ENCODE measurements at regions of chr20 and their contacts with region 1.

Region 1: DNA sequence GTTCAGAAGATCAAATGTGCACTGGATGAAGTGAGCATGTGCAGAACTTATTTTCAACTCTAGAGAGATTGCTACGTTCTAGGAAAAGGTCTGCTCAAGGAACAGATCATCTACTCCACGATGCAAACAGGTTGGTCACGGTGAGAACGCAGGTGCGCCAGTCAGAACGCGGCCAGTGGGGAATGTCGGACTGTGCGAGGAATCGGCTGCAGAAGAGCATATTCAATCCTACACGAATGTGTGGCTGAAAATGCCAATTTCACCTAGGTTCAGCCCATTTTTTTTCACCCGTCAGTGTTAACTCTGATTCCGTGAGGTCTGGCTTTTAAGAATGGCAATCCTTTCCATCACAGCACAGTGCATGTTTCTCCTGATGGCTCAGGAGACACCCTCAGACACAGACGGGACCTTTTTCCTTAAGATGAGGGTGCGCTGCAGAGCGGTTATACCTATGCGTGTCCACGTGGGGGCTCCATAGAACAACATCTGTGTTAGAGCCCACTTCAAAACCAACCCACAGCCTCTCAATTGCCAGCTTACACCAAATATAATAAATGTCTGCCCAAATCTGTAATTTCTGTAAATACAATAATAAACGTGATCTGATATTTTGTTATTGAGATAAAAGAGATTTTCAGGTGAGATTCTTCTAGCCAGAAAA is 250.4 kb downstream of the FOXA2 start:
- DNase-seq: peak; percentile 81 to 96
- ATAC-seq: peak; percentile 83 to 93
- H3K4me3 ChIP-seq: no peak overlapping the region
- H3K27ac ChIP-seq: no peak overlapping the region
- H3K4me1 ChIP-seq: no peaks in the 10 kb centered on the region
- CTCF ChIP-seq: peak; percentile 94
- EP300 ChIP-seq: no peak
- POLR2A ChIP-seq: no peak
- RAD21 ChIP-seq: peak; percentile 95 to 96

Region 2: GRCh38 chr20:22257912-22258311 is 76.1 kb before region 1 on chr20:
- CTCF ChIA-PET with region 1: no interaction called
- POLR2A ChIA-PET with region 1: no interaction called
- DNase-seq: no peak
- ATAC-seq: no peak
- H3K4me3 ChIP-seq: no peak overlapping the region
- H3K27ac ChIP-seq: no peak overlapping the region
- H3K4me1 ChIP-seq: no peaks in the 10 kb centered on the region
- CTCF ChIP-seq: no peak
- EP300 ChIP-seq: no peak
- POLR2A ChIP-seq: no peak
- RAD21 ChIP-seq: no peak

Region 3: DNA sequence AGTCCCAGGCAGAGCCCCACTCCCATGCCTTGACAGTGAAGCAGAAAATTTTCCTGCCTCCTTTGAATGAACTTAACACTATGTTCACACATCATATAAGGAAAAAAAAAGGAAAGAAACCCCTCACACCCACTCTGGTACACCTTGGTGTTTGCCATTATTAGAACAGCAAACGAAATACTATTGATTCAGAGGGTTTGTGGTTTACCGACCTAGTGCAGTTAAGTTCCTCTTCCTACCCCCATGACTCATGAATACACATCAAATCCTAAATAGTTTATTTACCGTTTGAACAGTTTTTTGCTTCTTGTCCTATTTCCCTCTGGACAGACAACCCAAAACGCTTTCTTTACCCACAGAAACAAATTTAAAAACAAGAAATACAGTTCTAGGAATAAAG is 12.7 kb after region 1 on chr20:
- CTCF ChIA-PET with region 1: interaction called, 85 read pairs
- POLR2A ChIA-PET with region 1: no interaction called
- DNase-seq: no peak
- ATAC-seq: 0 out of 6 replicates have a peak, but pooled peaks of 1 of the 2 experiments have one; percentile 27
- H3K4me3 ChIP-seq: no peak overlapping the region
- H3K27ac ChIP-seq: peak overlapping the region in 1 of 2 experiments; percentile 18; a peak in 3 of 6 replicates
- H3K4me1 ChIP-seq: peaks cover 13% of the 10 kb centered on the region
- CTCF ChIP-seq: no peak
- EP300 ChIP-seq: no peak
- POLR2A ChIP-seq: no peak
- RAD21 ChIP-seq: no peak

Region 4: GRCh38 chr20:22353586-22353985 is 19.6 kb after region 1 on chr20:
- CTCF ChIA-PET with region 1: interaction called, 85 read pairs
- POLR2A ChIA-PET with region 1: no interaction called
- DNase-seq: peak in 1 of 2 experiments; percentile 37
- ATAC-seq: no peak
- H3K4me3 ChIP-seq: no peak overlapping the region
- H3K27ac ChIP-seq: peak overlapping the region in 1 of 2 experiments; percentile 16; a peak in 2 of 6 replicates
- H3K4me1 ChIP-seq: peaks cover 15% of the 10 kb centered on the region
- CTCF ChIP-seq: no peak
- EP300 ChIP-seq: no peak
- POLR2A ChIP-seq: no peak
- RAD21 ChIP-seq: no peak

Region 5: DNA sequence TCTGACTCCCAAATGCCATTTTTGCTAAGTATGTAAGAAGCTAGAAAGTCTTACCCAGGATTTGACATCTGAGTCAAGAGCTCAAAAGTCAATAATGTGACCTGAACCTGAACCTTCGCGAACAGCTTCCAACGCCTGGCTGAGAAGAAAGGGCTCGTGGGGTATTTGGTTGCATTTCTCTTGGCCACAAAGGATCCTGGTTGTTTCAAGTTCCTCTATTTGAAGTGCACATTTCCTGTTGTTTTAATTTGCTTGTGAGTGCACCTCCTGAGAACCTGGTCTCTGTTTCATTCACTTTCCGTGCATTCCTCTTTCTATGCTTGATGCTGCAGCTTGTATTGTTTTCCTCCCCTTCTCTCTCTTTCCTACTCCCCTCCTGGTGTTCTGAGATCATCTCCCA is 37.8 kb after region 1 on chr20:
- CTCF ChIA-PET with region 1: interaction called, 63 read pairs
- POLR2A ChIA-PET with region 1: no interaction called
- DNase-seq: no peak
- ATAC-seq: no peak
- H3K4me3 ChIP-seq: no peak overlapping the region
- H3K27ac ChIP-seq: no peak overlapping the region
- H3K4me1 ChIP-seq: peaks cover 38% of the 10 kb centered on the region
- CTCF ChIP-seq: no peak
- EP300 ChIP-seq: no peak
- POLR2A ChIP-seq: no peak
- RAD21 ChIP-seq: no peak

Measured in A549 (cell line).